ENCODE measurements at regions of chr17 and their contacts with region 1.

Region 1: GRCh38 chr17:44503147-44504029 is at the start of gene GPATCH8:
- DNase-seq: peak; percentile 98
- total RNA-seq, gene GPATCH8: 28.5 to 36.4 TPM

Region 2: DNA sequence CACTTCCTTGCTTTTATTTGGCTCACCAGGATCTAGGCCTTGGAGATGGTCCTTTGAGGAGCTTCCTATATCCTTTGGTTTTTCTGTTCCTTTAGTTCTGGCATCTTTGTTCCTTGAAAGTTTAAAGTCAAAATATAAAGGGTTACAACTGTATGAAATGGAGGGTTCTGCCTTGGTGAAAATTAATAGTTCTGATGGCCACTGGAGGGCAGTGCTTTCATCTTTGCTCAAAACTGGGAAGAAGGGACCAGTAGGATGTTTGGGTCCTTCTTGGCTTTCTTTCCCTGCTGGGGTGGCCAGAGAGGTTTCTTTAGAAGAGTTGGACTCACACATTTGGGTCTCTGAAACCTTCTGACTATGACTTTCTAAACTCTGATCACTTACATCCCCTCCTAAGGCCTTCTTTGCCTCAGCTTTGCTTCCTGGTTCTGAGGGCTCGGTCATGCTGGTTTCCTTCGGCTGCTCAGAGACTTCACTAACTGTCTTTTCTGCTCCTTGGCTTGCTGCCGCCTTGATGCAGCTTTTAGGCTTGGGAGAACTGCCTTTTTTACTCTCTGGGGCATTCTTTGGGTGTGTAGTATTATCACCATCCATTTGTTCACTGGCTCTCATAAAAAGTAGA is 103.1 kb before region 1 on chr17:
- intact Hi-C with region 1: loop called in 1 of 2 experiments (anchors 10 kb)
- DNase-seq: no peak

Measured in posterior vena cava (tissue), 2 donors.